ENCODE measurements at regions of chr5 and their contacts with region 1.

Region 1: GRCh38 chr5:148740966-148741742 is 85.3 kb upstream of the ADRB2 start:
- DNase-seq: peak in 4 of 9 donors; percentile 12 to 30 (median 22)
- ATAC-seq: peak; percentile 65
- H3K4me3 ChIP-seq: no peak overlapping the region
- H3K4me3 Mint-ChIP-seq: no peak overlapping the region
- H3K27ac ChIP-seq: no peak overlapping the region
- H3K27ac Mint-ChIP-seq: no peak overlapping the region
- H3K4me1 ChIP-seq: no peaks in the 10 kb centered on the region
- H3K4me1 Mint-ChIP-seq: peaks cover 0 to 5% (median 0%) of the 10 kb centered on the region in 7 donors
- H3K27me3 ChIP-seq: no peaks in the 10 kb centered on the region
- H3K27me3 Mint-ChIP-seq: peaks cover 17 to 37% (median 26%) of the 10 kb centered on the region in 5 donors

Region 2: DNA sequence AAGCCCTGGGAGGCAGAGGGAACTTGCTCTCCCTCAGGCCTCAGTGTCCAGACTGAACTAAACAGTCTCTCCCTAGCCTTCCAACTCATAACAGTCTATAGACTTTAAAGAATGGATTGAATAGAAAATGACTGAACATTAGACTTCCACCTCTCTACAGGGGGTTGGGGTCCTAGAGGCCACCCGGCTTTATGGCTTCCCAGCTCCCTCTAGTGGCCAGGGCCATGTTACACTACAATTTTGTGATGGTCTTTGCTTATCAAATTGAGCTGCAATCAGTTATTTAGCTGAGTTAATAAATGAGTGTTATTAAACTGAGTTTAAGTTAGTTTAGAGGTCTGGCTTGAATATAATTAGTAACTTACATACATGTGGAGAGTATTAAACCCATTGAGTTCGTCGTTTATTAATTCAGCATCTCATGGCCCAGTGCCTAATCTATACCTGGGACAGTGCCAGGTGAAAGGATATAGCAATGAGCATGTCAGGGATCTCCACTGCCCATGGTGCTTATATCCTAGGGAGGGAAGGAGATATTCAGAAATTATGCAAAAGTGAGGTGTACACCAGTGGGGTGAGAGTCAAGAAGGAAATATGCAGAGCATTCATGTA is 216.5 kb after region 1 on chr5:
- CTCF ChIA-PET with region 1: interaction called, 11 read pairs
- POLR2A ChIA-PET with region 1: no interaction called
- intact Hi-C with region 1: loop called in 1 of 2 experiments (anchors 1 kb)
- DNase-seq: peak in 6 of 9 donors; percentile 12 to 31 (median 20)
- ATAC-seq: peak; percentile 57
- H3K4me3 ChIP-seq: no peak overlapping the region
- H3K4me3 Mint-ChIP-seq: no peak overlapping the region
- H3K27ac ChIP-seq: no peak overlapping the region
- H3K27ac Mint-ChIP-seq: no peak overlapping the region
- H3K4me1 ChIP-seq: no peaks in the 10 kb centered on the region
- H3K4me1 Mint-ChIP-seq: no peaks in the 10 kb centered on the region
- H3K27me3 ChIP-seq: no peaks in the 10 kb centered on the region
- H3K27me3 Mint-ChIP-seq: peaks cover 0 to 17% (median 5%) of the 10 kb centered on the region in 5 donors

Region 3: GRCh38 chr5:148998174-148998797 is 257.1 kb after region 1 on chr5:
- CTCF ChIA-PET with region 1: no interaction called
- POLR2A ChIA-PET with region 1: no interaction called
- intact Hi-C with region 1: loop called (anchors 1 kb)
- DNase-seq: peak in 5 of 9 donors; percentile 5 to 25 (median 17)
- ATAC-seq: peak; percentile 67
- H3K4me3 ChIP-seq: no peak overlapping the region
- H3K4me3 Mint-ChIP-seq: no peak overlapping the region
- H3K27ac ChIP-seq: no peak overlapping the region
- H3K27ac Mint-ChIP-seq: no peak overlapping the region
- H3K4me1 ChIP-seq: no peaks in the 10 kb centered on the region
- H3K4me1 Mint-ChIP-seq: no peaks in the 10 kb centered on the region
- H3K27me3 ChIP-seq: no peaks in the 10 kb centered on the region
- H3K27me3 Mint-ChIP-seq: peaks cover 19 to 61% (median 28%) of the 10 kb centered on the region in 5 donors

Region 4: DNA sequence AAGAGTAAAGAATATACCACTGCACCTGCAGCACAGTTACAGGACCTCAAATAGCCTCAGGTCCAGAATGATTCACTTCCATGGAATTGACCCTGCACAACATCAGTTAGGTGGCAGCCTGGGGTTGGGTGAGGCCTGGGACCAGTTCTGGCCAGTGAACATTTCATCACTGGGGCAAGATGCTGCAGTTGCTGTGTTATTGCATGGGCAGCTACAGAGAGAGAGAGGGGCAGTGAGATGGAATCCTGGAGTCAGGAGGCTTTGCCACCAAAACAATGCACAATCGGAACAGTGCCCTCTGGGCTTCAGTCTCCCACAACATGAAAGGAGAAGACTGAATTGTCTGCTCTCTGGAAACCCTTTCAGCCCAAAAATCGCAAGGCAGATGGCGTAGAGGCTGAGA is 269.9 kb after region 1 on chr5:
- CTCF ChIA-PET with region 1: no interaction called
- POLR2A ChIA-PET with region 1: no interaction called
- intact Hi-C with region 1: no loop called
- DNase-seq: no peak
- ATAC-seq: no peak
- H3K4me3 ChIP-seq: no peak overlapping the region
- H3K4me3 Mint-ChIP-seq: no peak overlapping the region
- H3K27ac ChIP-seq: no peak overlapping the region
- H3K27ac Mint-ChIP-seq: no peak overlapping the region
- H3K4me1 ChIP-seq: no peaks in the 10 kb centered on the region
- H3K4me1 Mint-ChIP-seq: peaks cover 0 to 1% (median 0%) of the 10 kb centered on the region in 7 donors
- H3K27me3 ChIP-seq: no peaks in the 10 kb centered on the region
- H3K27me3 Mint-ChIP-seq: peaks cover 0 to 7% (median 2%) of the 10 kb centered on the region in 5 donors